ENCODE measurements at regions of chr5 and their contacts with region 1.

Region 1: DNA sequence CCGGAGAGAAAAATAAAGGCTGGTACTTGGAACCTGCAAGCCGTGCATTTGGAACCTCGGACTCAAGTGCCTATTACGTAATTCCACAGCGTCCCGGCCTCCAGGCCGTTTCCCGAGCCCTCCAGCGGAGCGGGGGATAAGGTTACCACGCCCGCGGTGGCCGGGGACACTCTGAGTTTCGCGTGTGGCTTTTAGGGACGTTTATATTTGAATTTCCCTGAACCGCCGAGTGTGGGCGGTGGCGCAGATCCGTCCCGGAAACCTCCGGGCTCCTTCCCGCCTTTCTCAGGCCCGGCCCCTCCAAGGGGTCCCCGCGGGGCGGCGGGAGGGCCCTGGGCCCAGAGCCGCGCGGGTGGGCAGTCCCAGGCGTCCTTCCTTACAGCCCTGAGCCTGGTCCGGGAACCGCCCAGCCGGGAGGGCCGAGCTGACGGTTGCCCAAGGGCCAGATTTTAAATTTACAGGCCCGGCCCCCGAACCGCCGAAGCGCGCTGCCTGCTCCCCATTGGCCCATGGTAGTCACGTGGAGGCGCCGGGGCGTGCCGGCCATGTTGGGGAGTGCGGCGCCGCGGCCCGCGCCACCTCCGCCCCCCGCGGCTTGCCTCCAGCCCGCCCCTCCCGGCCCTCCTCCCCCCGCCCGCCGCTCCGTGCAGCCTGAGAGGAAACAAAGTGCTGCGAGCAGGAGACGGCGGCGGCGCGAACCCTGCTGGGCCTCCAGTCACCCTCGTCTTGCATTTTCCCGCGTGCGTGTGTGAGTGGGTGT is at the start of gene LMNB1:
- DNase-seq: peak; percentile 96 to 98
- H3K4me3 ChIP-seq: peak within 1 kb of the TSS; percentile 87
- H3K4me1 ChIP-seq: peaks cover 12% of the 10 kb centered on the region
- H3K27me3 ChIP-seq: no peaks in the 10 kb centered on the region

Region 2: GRCh38 chr5:126354012-126354857 is 422.4 kb before region 1 on chr5:
- in situ Hi-C with region 1: loop called (anchors 25 kb)
- DNase-seq: peak in 1 of 2 experiments; percentile 78
- H3K4me3 ChIP-seq: no peak overlapping the region
- H3K4me1 ChIP-seq: peaks cover 13% of the 10 kb centered on the region
- H3K27me3 ChIP-seq: no peaks in the 10 kb centered on the region; the same call in 1 of the 2 replicates

Region 3: GRCh38 chr5:126499853-126500342 is 276.8 kb before region 1 on chr5:
- in situ Hi-C with region 1: no loop called
- DNase-seq: peak; percentile 46 to 60
- H3K4me3 ChIP-seq: no peak overlapping the region
- H3K4me1 ChIP-seq: no peaks in the 10 kb centered on the region
- H3K27me3 ChIP-seq: peaks cover 5% of the 10 kb centered on the region; the same call in 1 of the 2 replicates

Region 4: DNA sequence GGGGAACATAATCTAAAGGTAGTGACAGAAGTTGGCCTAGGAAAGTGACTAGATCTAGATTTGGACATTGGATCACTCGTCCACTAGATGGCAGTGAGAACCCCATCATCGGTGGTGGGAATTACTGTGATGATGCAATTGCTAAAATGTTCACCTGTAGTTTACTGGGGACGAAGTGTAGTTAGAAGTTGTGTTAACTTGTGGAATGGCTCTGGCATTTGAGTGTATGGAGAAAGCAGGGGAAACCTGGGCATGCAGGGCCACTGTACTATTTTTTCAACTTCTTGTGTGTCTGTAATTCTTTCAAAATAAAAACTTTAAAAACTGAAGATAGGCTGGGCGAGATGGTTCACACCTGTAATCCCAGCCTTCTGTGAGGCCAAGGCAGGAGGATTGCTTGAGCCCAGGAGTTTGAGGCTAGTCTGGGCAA is 100.5 kb before region 1 on chr5:
- in situ Hi-C with region 1: loop called (anchors 5 kb)
- DNase-seq: peak; percentile 69
- H3K4me3 ChIP-seq: no peak overlapping the region
- H3K4me1 ChIP-seq: peaks cover 10% of the 10 kb centered on the region
- H3K27me3 ChIP-seq: no peaks in the 10 kb centered on the region

Measured in HAP-1 (cell line).